Calu3 (cell line): ENCODE measurements at regions of chr15 and their contacts with region 1.

Region 1: GRCh38 chr15:61834076-61834697 is 226.1 kb downstream of the VPS13C start:
- DNase-seq: peak; percentile 90
- H3K4me3 Mint-ChIP-seq: no peak overlapping the region
- H3K27ac Mint-ChIP-seq: no peak overlapping the region
- H3K4me1 Mint-ChIP-seq: peaks cover 1% of the 10 kb centered on the region
- H3K27me3 Mint-ChIP-seq: peaks cover 64% of the 10 kb centered on the region
- CTCF ChIP-seq: peak; percentile 95

Region 2: DNA sequence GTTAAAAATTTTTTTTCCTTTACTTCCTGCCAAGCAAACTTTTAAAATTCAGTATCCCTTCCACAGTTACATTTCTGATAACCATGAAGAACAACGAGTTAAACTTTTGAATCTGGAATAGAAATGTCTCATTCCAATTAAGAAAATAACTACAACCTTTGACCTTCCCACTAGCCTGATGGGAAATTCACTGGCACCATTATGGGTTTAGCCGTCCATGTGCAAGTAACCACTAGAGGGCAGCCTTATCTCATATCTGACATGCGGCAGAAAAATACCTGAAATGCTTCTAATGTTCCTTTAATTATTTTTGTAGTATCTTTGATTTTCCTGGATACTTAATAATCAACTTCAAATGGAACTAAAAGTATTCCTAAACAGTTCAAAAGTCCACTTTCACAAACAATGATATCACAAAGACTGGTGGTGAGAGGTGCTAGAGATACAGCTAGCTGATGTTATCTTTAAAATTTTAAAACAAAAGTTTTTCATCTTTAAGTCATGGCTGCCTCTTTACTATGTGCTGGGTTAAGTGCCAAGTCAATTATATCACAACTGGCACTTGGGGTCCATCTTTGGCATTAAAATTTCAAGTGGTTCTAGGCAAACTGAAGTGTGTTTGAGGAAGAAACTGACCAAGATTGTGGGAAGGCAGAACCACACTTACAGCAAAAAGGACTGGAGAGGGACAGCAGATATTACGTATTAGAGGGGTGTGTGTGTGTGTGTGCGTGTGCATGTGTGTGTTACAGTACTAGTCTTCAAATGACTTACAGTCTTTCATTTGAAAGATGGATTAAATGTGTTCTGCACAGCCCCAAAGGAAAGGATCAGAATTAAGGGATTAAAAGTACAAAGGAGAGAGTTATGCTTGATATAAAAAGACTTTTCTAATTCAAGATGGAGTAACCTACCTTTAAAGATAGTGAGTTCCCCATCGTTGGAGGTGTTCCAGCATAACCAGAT is 1248.2 kb before region 1 on chr15:
- CTCF ChIA-PET with region 1: interaction called, 5 read pairs
- intact Hi-C with region 1: loop called (anchors 5 kb)
- DNase-seq: peak; percentile 76
- H3K4me3 Mint-ChIP-seq: no peak overlapping the region
- H3K27ac Mint-ChIP-seq: no peak overlapping the region
- H3K4me1 Mint-ChIP-seq: peaks cover 9% of the 10 kb centered on the region
- H3K27me3 Mint-ChIP-seq: peaks cover 38% of the 10 kb centered on the region
- CTCF ChIP-seq: peak; percentile 76

Region 3: GRCh38 chr15:61169904-61170695 is 664.1 kb before region 1 on chr15:
- CTCF ChIA-PET with region 1: interaction called, 19 read pairs
- intact Hi-C with region 1: loop called (anchors 2 kb)
- DNase-seq: no peak
- H3K4me3 Mint-ChIP-seq: no peak overlapping the region
- H3K27ac Mint-ChIP-seq: no peak overlapping the region
- H3K4me1 Mint-ChIP-seq: no peaks in the 10 kb centered on the region
- H3K27me3 Mint-ChIP-seq: peaks cover 37% of the 10 kb centered on the region
- CTCF ChIP-seq: no peak

Region 4: DNA sequence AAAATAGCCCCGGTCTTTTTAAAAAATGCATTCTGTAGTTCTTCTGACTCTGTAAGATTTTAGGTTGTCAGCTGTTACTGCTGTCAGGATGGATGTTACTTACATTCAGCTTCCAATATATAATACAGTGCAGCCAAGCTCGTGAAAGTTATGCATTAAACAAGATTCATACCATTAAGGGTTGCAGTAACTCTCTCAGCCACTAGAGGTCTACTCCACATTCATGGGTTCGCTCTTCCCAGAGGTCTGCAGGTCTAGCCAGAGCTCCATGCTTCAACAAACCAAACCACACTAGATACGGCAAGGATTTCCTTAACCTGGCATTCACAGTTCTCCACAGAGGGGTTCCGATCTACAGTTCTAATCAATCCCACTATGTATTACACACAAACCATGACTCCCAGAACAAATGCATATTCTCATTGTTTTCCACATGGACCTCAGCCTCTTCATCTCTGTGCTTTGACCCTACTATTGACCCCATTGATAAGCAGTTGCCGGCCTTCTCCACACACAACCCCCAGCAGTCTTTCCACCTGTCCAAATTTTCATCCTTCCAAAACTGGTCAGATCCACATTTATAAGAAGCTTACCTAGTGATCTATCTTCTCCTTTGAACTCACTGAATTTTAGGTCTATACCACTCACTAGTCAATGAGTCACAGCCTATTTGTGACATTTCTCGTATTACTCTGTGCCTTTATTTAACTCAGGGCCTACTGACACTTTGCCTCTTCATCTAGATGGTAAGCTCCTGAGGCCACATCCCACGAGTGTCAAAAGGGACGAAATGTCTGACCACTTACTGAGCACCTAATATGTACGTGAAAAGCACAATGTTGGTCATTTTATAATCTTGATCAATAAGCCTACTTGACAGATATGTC is 638.8 kb before region 1 on chr15:
- CTCF ChIA-PET with region 1: interaction called, 22 read pairs
- intact Hi-C with region 1: loop called (anchors 10 kb)
- DNase-seq: no peak
- H3K4me3 Mint-ChIP-seq: no peak overlapping the region
- H3K27ac Mint-ChIP-seq: no peak overlapping the region
- H3K4me1 Mint-ChIP-seq: no peaks in the 10 kb centered on the region
- H3K27me3 Mint-ChIP-seq: peaks cover 80% of the 10 kb centered on the region
- CTCF ChIP-seq: peak; percentile 51

Region 5: GRCh38 chr15:61621146-61621545 is 213.0 kb before region 1 on chr15:
- CTCF ChIA-PET with region 1: interaction called, 11 read pairs
- intact Hi-C with region 1: no loop called
- DNase-seq: peak; percentile 40
- H3K4me3 Mint-ChIP-seq: no peak overlapping the region
- H3K27ac Mint-ChIP-seq: no peak overlapping the region
- H3K4me1 Mint-ChIP-seq: no peaks in the 10 kb centered on the region
- H3K27me3 Mint-ChIP-seq: peaks cover 35% of the 10 kb centered on the region
- CTCF ChIP-seq: peak; percentile 26